ENCODE measurements at regions of chr4 and their contacts with region 1.

Region 1: DNA sequence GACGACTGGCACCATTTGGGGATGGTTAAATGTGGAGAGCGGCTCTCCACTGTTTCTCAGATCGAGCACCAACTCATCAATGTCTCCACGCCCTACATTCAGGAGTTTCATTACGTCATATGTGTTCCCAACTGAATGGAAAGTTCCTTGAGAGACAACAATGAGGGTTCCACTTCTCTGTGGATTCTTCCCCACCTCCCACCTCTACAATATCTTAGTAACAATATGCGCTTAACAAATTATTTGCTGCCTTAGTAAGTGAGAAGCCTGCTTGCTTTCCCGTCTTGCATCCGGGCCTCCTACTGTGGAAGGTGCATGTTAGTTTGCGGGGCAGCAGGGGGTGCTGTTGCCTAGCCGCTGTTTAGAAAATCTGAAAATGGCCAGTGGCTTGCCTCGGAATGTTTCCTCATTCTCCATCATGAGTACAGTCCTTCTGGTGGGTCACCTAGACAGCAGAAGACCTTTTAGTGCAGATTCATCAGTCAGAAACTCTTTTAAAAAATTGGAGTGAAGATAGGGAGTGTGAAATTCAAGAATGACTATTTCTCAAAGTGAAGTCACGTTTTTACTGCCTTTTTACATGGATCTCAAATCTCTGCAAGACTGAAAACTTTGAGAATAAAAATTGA is 55.7 kb downstream of the PHOX2B start:
- DNase-seq: peak; percentile 40
- H3K4me3 ChIP-seq: no peak overlapping the region
- H3K27ac ChIP-seq: no peak overlapping the region
- H3K4me1 ChIP-seq: no peaks in the 10 kb centered on the region
- H3K27me3 ChIP-seq: no peaks in the 10 kb centered on the region
- CTCF ChIP-seq: peak; percentile 91 to 93

Region 2: GRCh38 chr4:41751449-41752061 is 58.7 kb after region 1 on chr4:
- CTCF ChIA-PET with region 1: no interaction called
- dilution Hi-C with region 1: no loop called
- in situ Hi-C with region 1: no loop called
- intact Hi-C with region 1: loop called (anchors 1 kb)
- DNase-seq: no peak
- H3K4me3 ChIP-seq: no peak overlapping the region
- H3K27ac ChIP-seq: no peak overlapping the region
- H3K4me1 ChIP-seq: no peaks in the 10 kb centered on the region
- H3K27me3 ChIP-seq: peaks cover 59% of the 10 kb centered on the region
- CTCF ChIP-seq: peak in 1 of 2 donors; percentile 20

Region 3: DNA sequence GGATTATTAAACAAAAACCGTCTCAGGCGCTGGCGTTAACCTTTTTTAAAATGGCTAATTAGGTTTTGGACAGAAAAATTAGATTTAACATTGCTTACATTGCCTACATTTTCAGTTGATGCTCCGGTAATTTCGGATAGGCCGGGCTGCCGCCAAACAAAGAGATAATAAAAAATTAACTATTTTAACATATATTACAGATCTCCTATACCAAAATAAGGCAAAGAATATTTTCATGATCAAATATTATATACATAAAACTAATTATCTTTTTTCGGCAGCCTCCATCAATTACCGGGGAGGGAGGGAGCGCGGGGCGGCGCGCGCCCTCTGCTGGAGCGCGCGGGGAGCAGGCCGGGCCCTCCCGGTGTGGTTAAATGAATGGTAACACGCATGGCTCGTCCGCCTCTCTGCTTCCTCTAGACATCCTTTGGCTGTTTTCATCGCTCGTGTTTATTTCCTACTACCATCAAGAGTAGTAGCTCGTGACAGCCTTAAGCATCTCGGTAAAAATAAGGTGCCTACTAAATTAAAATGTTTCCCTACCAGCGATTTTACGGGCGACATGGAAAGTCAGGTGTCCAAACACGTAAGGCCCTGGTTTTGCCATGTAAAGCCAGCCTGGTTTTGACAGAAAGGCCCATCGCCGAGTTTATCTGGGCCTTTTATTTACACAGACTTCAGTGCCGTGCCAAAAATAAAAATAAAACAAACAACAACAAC is 190.0 kb after region 1 on chr4:
- CTCF ChIA-PET with region 1: no interaction called
- dilution Hi-C with region 1: no loop called
- in situ Hi-C with region 1: loop called (anchors 5 kb)
- intact Hi-C with region 1: loop called (anchors 1 kb)
- DNase-seq: peak; percentile 21
- H3K4me3 ChIP-seq: no peak overlapping the region
- H3K27ac ChIP-seq: no peak overlapping the region
- H3K4me1 ChIP-seq: peaks cover 12% of the 10 kb centered on the region
- H3K27me3 ChIP-seq: peaks cover 54% of the 10 kb centered on the region
- CTCF ChIP-seq: peak; percentile 69 to 94

Region 4: DNA sequence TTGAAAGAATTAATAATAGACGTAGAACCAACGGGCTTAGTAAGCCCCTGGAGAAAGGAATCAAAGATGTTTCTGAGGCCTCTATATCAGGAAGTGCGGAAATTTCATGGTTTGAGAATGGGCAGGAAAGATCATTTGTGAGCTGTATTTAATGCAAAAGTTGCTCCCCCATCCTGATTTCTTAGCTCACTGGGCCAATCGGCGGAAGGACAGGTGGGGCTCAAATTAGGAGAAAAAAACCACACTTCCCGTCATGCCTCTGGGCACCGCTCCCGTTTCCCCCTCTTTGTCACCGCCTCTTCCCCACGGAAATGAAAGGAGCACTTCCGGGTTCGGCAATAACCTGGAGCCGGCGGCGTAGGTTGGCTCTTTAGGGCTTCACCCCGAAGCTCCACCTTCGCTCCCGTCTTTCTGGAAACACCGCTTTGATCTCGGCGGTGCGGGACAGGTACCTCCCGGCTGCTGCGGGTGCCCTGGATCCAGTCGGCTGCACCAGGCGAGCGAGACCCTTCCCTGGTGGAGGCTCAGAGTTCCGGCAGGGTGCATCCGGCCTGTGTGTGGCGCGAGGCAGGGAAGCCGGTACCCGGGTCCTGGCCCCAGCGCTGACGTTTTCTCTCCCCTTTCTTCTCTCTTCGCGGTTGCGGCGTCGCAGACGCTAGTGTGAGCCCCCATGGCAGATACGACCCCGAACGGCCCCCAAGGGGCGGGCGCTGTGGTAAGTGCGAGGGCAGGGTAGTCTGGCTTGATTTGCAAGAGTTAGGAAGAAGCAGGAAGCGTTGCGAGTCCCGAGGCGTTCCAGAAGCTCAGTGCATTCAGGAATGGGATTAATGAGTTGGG is 242.2 kb after region 1 on chr4 and contains the start of gene TMEM33:
- CTCF ChIA-PET with region 1: no interaction called
- dilution Hi-C with region 1: no loop called
- in situ Hi-C with region 1: no loop called
- intact Hi-C with region 1: loop called (anchors 1 kb)
- DNase-seq: peak; percentile 90
- H3K4me3 ChIP-seq: peak within 1 kb of the TSS; percentile 64 to 75 (median 71)
- H3K27ac ChIP-seq: peak within 1 kb of the TSS; percentile 73
- H3K4me1 ChIP-seq: peaks cover 26% of the 10 kb centered on the region
- H3K27me3 ChIP-seq: no peaks in the 10 kb centered on the region
- CTCF ChIP-seq: peak in 1 of 2 donors; percentile 12
- total RNA-seq, gene TMEM33: 86.2 to 101 TPM

Region 5: GRCh38 chr4:42519803-42520417 is 827.1 kb after region 1 on chr4:
- CTCF ChIA-PET with region 1: no interaction called
- dilution Hi-C with region 1: no loop called
- in situ Hi-C with region 1: loop called in 1 of 2 experiments (anchors 10 kb)
- intact Hi-C with region 1: loop called (anchors 1 kb)
- DNase-seq: peak; percentile 21
- H3K4me3 ChIP-seq: no peak overlapping the region
- H3K27ac ChIP-seq: no peak overlapping the region
- H3K4me1 ChIP-seq: no peaks in the 10 kb centered on the region
- H3K27me3 ChIP-seq: no peaks in the 10 kb centered on the region
- CTCF ChIP-seq: peak; percentile 47 to 57